Caco-2 (cell line): ENCODE measurements at regions of chr2 and their contacts with region 1.

Region 1: DNA sequence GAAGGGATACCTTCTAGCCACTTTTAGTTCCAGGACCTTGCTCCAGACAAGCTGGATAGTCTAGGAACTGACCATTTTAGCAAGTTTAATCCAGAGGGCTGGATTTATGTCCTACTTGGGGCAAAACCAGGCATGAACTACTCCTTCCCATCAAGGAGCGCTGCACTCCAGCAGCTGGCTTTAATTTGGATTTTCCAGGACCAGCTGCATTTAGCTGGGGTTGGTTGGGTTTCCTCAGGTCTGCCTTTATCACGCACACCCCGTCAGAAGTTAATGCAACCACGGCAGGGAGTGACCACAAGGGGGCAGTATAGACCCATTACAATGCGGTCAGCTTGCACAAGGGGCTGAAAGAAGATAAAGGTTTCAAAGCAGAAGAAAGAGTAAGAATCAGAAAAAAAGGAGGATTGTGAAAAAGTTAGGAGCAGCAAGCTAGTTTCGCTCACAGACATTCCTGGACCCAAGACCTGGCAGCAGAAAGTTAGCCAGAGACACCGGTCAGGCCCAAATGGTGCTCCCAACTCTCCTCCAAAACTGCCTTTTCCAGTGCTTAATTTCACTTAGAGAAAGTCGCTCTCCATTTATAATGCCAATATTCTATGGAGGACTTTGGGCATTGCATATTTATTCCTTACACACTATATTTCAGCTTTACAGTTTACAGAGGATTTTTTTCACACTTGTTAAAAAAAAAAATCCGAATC is 40.1 kb downstream of the SLC4A1AP start:
- DNase-seq: peak; percentile 90 to 93
- H3K4me3 ChIP-seq: no peak overlapping the region
- H3K4me3 Mint-ChIP-seq: peak overlapping the region; percentile 34
- H3K27ac Mint-ChIP-seq: peak overlapping the region; percentile 20
- H3K4me1 ChIP-seq: peaks cover 65% of the 10 kb centered on the region
- H3K4me1 Mint-ChIP-seq: peaks cover 48% of the 10 kb centered on the region
- H3K27me3 ChIP-seq: no peaks in the 10 kb centered on the region
- H3K27me3 Mint-ChIP-seq: no peaks in the 10 kb centered on the region
- CTCF ChIP-seq: peak; percentile 88 to 91

Region 2: DNA sequence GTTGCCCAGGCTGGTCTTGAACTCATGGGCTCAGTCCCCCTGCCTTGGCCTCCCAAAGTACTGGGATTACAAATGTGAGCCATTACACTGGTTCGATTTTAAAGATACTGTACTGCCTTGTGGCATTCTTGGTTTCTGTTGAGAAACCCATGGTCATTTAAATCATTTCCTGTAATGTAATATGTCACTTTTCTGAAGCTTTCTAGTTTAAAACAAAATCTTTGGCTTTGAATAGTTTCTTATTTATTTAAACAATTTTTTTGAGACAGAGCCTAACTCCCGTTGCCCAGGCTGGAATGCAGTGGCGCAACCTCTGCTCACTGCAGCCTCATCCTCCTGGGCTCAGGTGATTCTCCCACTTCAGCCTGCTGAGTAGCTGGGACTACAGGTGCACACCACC is 112.0 kb before region 1 on chr2:
- CTCF ChIA-PET with region 1: no interaction called
- POLR2A ChIA-PET with region 1: no interaction called
- intact Hi-C with region 1: no loop called
- DNase-seq: peak in 1 of 2 experiments; percentile 18
- H3K4me3 ChIP-seq: no peak overlapping the region
- H3K4me3 Mint-ChIP-seq: no peak overlapping the region
- H3K27ac Mint-ChIP-seq: no peak overlapping the region
- H3K4me1 ChIP-seq: no peaks in the 10 kb centered on the region
- H3K4me1 Mint-ChIP-seq: peaks cover 12% of the 10 kb centered on the region
- H3K27me3 ChIP-seq: no peaks in the 10 kb centered on the region
- H3K27me3 Mint-ChIP-seq: no peaks in the 10 kb centered on the region
- CTCF ChIP-seq: no peak

Region 3: GRCh38 chr2:27723372-27724144 is 19.8 kb after region 1 on chr2:
- CTCF ChIA-PET with region 1: interaction called, 5 read pairs
- POLR2A ChIA-PET with region 1: no interaction called
- intact Hi-C with region 1: loop called (anchors 2 kb)
- DNase-seq: peak; percentile 78 to 81
- H3K4me3 ChIP-seq: no peak overlapping the region
- H3K4me3 Mint-ChIP-seq: no peak overlapping the region
- H3K27ac Mint-ChIP-seq: peak overlapping the region; percentile 80
- H3K4me1 ChIP-seq: peaks cover 60% of the 10 kb centered on the region
- H3K4me1 Mint-ChIP-seq: peaks cover 48% of the 10 kb centered on the region
- H3K27me3 ChIP-seq: no peaks in the 10 kb centered on the region
- H3K27me3 Mint-ChIP-seq: no peaks in the 10 kb centered on the region
- CTCF ChIP-seq: peak; percentile 85 to 87

Region 4: DNA sequence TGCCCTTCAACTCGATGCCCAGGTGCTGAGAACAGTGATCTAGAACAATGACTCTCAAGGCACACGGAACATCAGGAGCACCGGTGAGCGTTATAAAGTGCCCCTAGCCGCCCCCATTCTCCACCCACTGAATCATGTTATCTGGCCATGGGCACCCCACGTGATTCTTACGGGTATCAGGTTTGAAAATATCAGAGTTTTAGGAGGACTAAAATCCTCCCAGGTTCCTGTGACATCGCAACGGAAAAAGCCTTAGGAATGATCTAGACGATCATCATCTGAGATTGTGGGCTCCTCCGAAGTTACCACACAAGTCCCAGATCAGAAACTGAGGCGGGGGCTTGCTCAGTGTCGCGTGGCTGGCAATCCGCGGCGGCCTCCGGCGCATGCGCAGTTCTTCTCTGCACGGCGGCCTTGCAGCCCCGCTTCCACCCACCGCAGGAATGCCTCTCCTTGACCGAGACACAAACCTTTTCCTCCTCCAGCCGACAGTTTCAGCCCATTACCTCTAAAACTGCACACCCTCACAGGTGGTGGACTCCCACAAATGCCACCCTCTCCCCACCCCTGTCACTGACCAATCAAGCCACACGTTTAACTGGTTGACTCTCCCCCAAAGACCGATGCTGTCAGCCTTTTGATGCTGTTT is 62.0 kb after region 1 on chr2:
- CTCF ChIA-PET with region 1: no interaction called
- POLR2A ChIA-PET with region 1: no interaction called
- intact Hi-C with region 1: loop called (anchors 1 kb)
- DNase-seq: peak; percentile 95 to 96
- H3K4me3 ChIP-seq: peak overlapping the region; percentile 22
- H3K4me3 Mint-ChIP-seq: peak overlapping the region; percentile 85
- H3K27ac Mint-ChIP-seq: peak overlapping the region; percentile 98
- H3K4me1 ChIP-seq: peaks cover 59% of the 10 kb centered on the region
- H3K4me1 Mint-ChIP-seq: peaks cover 27% of the 10 kb centered on the region
- H3K27me3 ChIP-seq: no peaks in the 10 kb centered on the region
- H3K27me3 Mint-ChIP-seq: no peaks in the 10 kb centered on the region
- CTCF ChIP-seq: no peak

Region 5: GRCh38 chr2:27890146-27890923 is 186.5 kb after region 1 on chr2 and contains the starts of genes BABAM2 and RBKS:
- CTCF ChIA-PET with region 1: interaction called, 3 read pairs
- POLR2A ChIA-PET with region 1: interaction called, 7 read pairs
- intact Hi-C with region 1: loop called (anchors 2 kb)
- DNase-seq: peak; percentile 93 to 94
- H3K4me3 ChIP-seq: peak within 1 kb of the TSS; percentile 63
- H3K4me3 Mint-ChIP-seq: peak within 1 kb of the TSS; percentile 100
- H3K27ac Mint-ChIP-seq: peak within 1 kb of the TSS; percentile 99
- H3K4me1 ChIP-seq: no peaks in the 10 kb centered on the region
- H3K4me1 Mint-ChIP-seq: no peaks in the 10 kb centered on the region
- H3K27me3 ChIP-seq: no peaks in the 10 kb centered on the region
- H3K27me3 Mint-ChIP-seq: no peaks in the 10 kb centered on the region
- CTCF ChIP-seq: no peak
- total RNA-seq, gene BABAM2: 50.7 and 57.3 TPM in 2 replicates
- total RNA-seq, gene RBKS: 7.1 and 7.4 TPM in 2 replicates

Region 6: DNA sequence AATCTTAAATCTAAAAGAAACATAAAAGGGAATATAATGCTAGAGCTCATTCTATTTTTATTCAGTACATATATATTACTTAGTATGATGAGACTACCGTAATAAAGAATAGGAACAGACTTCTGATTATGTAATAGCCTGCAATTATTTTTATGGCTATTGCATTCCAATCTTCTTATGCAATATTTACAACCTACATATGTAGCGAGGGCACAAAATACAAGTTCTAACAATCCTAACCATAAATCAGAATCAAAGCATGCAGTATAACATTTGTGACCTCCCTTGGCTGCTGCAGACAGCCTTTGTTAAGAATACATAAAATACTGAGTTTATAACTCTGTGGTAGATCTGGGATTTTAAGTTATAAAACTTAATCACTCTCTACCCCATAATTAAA is 364.3 kb after region 1 on chr2:
- CTCF ChIA-PET with region 1: no interaction called
- POLR2A ChIA-PET with region 1: no interaction called
- intact Hi-C with region 1: loop called (anchors 10 kb)
- DNase-seq: peak in 1 of 2 experiments; percentile 37
- H3K4me3 ChIP-seq: no peak overlapping the region
- H3K4me3 Mint-ChIP-seq: no peak overlapping the region
- H3K27ac Mint-ChIP-seq: no peak overlapping the region
- H3K4me1 ChIP-seq: peaks cover 19% of the 10 kb centered on the region
- H3K4me1 Mint-ChIP-seq: peaks cover 7% of the 10 kb centered on the region
- H3K27me3 ChIP-seq: no peaks in the 10 kb centered on the region
- H3K27me3 Mint-ChIP-seq: no peaks in the 10 kb centered on the region
- CTCF ChIP-seq: no peak

Region 7: DNA sequence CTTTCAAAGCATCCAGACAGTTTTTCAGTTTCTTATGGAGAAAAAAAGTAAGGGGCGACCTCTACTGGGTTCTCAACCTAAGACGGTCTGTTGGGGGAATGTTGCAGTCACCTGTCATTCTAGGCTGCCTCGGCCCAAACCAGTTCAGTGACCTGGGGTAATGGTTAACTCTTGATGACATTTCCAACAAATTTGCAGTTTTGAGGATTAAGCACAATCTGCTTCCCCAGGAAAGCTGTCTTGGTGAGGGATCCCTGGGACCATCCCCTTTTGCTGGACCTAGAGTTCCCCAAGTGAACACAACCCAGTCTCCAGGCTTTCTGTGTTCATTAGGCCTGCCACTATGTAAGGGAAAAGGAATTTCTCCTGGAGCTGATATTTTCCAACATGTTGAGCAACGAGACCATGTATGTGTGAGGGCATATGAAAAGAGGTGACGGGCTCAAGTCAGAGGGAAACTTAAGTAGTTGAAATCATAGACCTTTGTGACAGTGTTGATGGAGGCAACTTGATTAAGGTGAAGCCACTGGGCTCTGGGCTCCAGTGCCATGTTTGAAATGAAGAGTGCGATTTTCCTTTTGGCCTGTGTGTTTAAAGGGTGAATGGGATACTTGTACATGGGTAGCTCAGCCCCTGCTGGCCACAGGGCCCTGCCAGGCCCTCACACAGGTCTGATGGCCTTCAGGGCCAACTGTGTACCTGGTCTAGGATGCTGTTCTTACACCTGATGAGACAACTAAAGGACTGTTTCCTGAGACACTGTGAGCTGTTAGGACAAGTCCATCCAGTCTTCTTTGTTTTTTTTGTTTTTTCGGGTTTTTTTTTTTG is 715.9 kb after region 1 on chr2:
- CTCF ChIA-PET with region 1: interaction called, 7 read pairs
- POLR2A ChIA-PET with region 1: no interaction called
- intact Hi-C with region 1: loop called (anchors 1 kb)
- DNase-seq: peak; percentile 85 to 86
- H3K4me3 ChIP-seq: no peak overlapping the region
- H3K4me3 Mint-ChIP-seq: peak overlapping the region; percentile 52
- H3K27ac Mint-ChIP-seq: peak overlapping the region; percentile 93
- H3K4me1 ChIP-seq: peaks cover 23% of the 10 kb centered on the region
- H3K4me1 Mint-ChIP-seq: peaks cover 19% of the 10 kb centered on the region
- H3K27me3 ChIP-seq: no peaks in the 10 kb centered on the region
- H3K27me3 Mint-ChIP-seq: no peaks in the 10 kb centered on the region
- CTCF ChIP-seq: peak; percentile 32 to 47